Posterior cingulate gyrus (tissue), 11 donors: ENCODE measurements at regions of chr9 and their contacts with region 1.

Region 1: DNA sequence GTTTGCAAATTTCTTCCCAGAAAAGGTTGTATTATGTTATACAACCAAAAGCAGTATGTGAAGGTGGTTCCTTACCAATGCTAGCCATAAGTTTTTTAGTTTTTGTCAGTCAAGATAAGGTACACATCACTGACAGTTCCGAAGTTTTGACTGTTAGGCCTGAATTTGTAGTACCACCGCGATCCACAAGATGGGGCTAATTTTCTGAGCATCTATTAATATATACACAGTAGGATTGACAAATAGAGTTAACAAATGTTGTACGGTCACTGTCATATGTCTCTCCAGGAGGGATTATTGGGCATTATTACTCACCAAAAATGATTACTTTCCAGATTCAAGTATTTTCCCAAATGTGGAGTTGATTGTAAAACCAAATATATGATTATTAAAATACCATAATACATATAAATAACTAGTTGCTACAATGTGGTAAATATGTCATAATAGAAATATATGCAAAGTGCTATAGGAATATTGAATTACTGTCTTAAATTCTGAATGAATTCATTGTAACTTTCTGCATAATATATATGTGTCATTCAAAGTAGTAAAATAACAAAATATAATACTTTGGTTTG is 28.4 kb upstream of the LRRC19 start:
- DNase-seq: peak in 5 of 10 donors; percentile 32 to 73 (median 59)

Region 2: DNA sequence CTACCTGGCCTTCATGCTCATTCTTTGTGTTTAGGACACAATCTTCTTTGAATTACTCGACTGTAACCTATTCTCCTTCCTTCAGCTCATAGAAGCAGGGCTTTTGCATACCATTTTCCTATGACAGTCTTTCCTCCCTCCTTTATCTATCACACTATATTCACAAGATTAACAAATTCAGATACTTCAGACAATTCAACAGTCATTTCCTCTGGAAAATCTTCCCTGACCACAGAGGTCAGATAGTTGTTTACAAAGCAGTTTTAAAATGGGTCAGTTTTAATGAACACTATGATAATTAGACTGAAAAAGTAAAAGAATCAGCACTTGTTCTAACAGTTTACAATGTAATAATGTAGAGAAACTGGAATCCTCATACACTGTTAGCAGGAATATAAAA is 145.6 kb before region 1 on chr9:
- intact Hi-C with region 1: no loop called
- DNase-seq: no peak

Region 3: GRCh38 chr9:27276193-27277030 is 242.5 kb after region 1 on chr9:
- intact Hi-C with region 1: loop called (anchors 2 kb)
- DNase-seq: peak in 1 of 10 donors; percentile 13